ENCODE measurements at regions of chr11 and their contacts with region 1.

Region 1: GRCh38 chr11:125874556-125875124 is 12.8 kb upstream of the HYLS1 start:
- DNase-seq: peak; percentile 70
- ATAC-seq: peak; percentile 98
- H3K4me3 ChIP-seq: no peak overlapping the region
- H3K27ac ChIP-seq: no peak overlapping the region
- H3K4me1 ChIP-seq: no peaks in the 10 kb centered on the region
- H3K27me3 ChIP-seq: peaks cover 2% of the 10 kb centered on the region
- CTCF ChIP-seq: peak; percentile 82
- POLR2A ChIP-seq: no peak
- RAD21 ChIP-seq: peak; percentile 84

Region 2: GRCh38 chr11:124961972-124962609 is 912.5 kb before region 1 on chr11:
- CTCF ChIA-PET with region 1: no interaction called
- POLR2A ChIA-PET with region 1: no interaction called
- dilution Hi-C with region 1: no loop called
- in situ Hi-C with region 1: no loop called
- intact Hi-C with region 1: loop called (anchors 1 kb)
- DNase-seq: peak; percentile 85
- ATAC-seq: peak; percentile 100
- H3K4me3 ChIP-seq: no peak overlapping the region
- H3K27ac ChIP-seq: no peak overlapping the region
- H3K4me1 ChIP-seq: no peaks in the 10 kb centered on the region
- H3K27me3 ChIP-seq: no peaks in the 10 kb centered on the region
- CTCF ChIP-seq: peak; percentile 91
- POLR2A ChIP-seq: peak; percentile 43; the same call in 1 of the 2 replicates
- RAD21 ChIP-seq: peak; percentile 95

Region 3: GRCh38 chr11:125345421-125346178 is 529.0 kb before region 1 on chr11:
- CTCF ChIA-PET with region 1: no interaction called
- POLR2A ChIA-PET with region 1: no interaction called
- dilution Hi-C with region 1: no loop called
- in situ Hi-C with region 1: no loop called
- intact Hi-C with region 1: loop called (anchors 2 kb)
- DNase-seq: peak; percentile 67
- ATAC-seq: peak; percentile 82
- H3K4me3 ChIP-seq: no peak overlapping the region
- H3K27ac ChIP-seq: no peak overlapping the region
- H3K4me1 ChIP-seq: peaks cover 2% of the 10 kb centered on the region; the same call in 1 of the 2 replicates
- H3K27me3 ChIP-seq: no peaks in the 10 kb centered on the region
- CTCF ChIP-seq: peak; percentile 89
- POLR2A ChIP-seq: no peak
- RAD21 ChIP-seq: peak; percentile 78

Region 4: GRCh38 chr11:125494974-125495725 is 379.5 kb before region 1 on chr11:
- CTCF ChIA-PET with region 1: no interaction called
- POLR2A ChIA-PET with region 1: no interaction called
- dilution Hi-C with region 1: no loop called
- in situ Hi-C with region 1: no loop called
- intact Hi-C with region 1: loop called (anchors 10 kb)
- DNase-seq: peak; percentile 31
- ATAC-seq: peak; percentile 59
- H3K4me3 ChIP-seq: peak overlapping the region; percentile 94
- H3K27ac ChIP-seq: peak overlapping the region; percentile 83
- H3K4me1 ChIP-seq: peaks cover 5% of the 10 kb centered on the region; the same call in 1 of the 2 replicates
- H3K27me3 ChIP-seq: no peaks in the 10 kb centered on the region
- CTCF ChIP-seq: no peak
- POLR2A ChIP-seq: no peak
- RAD21 ChIP-seq: no peak

Region 5: GRCh38 chr11:125625630-125626287 is 248.9 kb before region 1 on chr11:
- CTCF ChIA-PET with region 1: interaction called, 4 read pairs
- POLR2A ChIA-PET with region 1: no interaction called
- dilution Hi-C with region 1: no loop called
- in situ Hi-C with region 1: loop called (anchors 10 kb)
- intact Hi-C with region 1: loop called (anchors 1 kb)
- DNase-seq: peak; percentile 85
- ATAC-seq: peak; percentile 73
- H3K4me3 ChIP-seq: peak overlapping the region; percentile 72
- H3K27ac ChIP-seq: peak overlapping the region; percentile 95
- H3K4me1 ChIP-seq: peaks cover 8% of the 10 kb centered on the region
- H3K27me3 ChIP-seq: no peaks in the 10 kb centered on the region
- CTCF ChIP-seq: no peak
- POLR2A ChIP-seq: peak; percentile 78
- RAD21 ChIP-seq: no peak

Region 6: GRCh38 chr11:125918140-125918840 is 43.6 kb after region 1 on chr11:
- CTCF ChIA-PET with region 1: no interaction called
- POLR2A ChIA-PET with region 1: no interaction called
- dilution Hi-C with region 1: no loop called
- in situ Hi-C with region 1: no loop called
- intact Hi-C with region 1: no loop called
- DNase-seq: no peak
- ATAC-seq: no peak
- H3K4me3 ChIP-seq: no peak overlapping the region
- H3K27ac ChIP-seq: no peak overlapping the region
- H3K4me1 ChIP-seq: no peaks in the 10 kb centered on the region
- H3K27me3 ChIP-seq: peaks cover 32% of the 10 kb centered on the region
- CTCF ChIP-seq: no peak
- POLR2A ChIP-seq: no peak
- RAD21 ChIP-seq: no peak

Region 7: DNA sequence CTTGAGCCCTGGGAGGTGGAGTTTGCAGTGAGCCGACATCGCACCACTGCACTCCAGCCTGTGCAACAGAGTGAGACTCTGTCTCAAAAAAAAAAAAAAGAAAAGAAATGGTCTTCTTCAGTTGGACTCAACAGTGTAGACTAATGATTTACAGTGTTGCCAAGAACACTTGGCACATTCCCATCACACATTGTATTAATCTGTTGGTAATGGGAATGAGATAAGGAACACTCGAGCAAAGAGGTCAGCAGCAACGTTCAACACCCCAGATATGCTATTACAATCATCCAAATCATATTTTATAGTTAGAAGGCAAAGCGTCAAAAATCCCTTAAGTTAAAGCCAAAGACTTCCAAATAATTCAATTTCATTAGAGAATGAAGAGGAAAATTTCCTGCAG is 173.6 kb after region 1 on chr11:
- CTCF ChIA-PET with region 1: no interaction called
- POLR2A ChIA-PET with region 1: no interaction called
- dilution Hi-C with region 1: no loop called
- in situ Hi-C with region 1: no loop called
- intact Hi-C with region 1: no loop called
- DNase-seq: no peak
- ATAC-seq: no peak
- H3K4me3 ChIP-seq: no peak overlapping the region
- H3K27ac ChIP-seq: no peak overlapping the region
- H3K4me1 ChIP-seq: no peaks in the 10 kb centered on the region
- H3K27me3 ChIP-seq: peaks cover 5% of the 10 kb centered on the region
- CTCF ChIP-seq: no peak
- POLR2A ChIP-seq: no peak
- RAD21 ChIP-seq: no peak

Region 8: DNA sequence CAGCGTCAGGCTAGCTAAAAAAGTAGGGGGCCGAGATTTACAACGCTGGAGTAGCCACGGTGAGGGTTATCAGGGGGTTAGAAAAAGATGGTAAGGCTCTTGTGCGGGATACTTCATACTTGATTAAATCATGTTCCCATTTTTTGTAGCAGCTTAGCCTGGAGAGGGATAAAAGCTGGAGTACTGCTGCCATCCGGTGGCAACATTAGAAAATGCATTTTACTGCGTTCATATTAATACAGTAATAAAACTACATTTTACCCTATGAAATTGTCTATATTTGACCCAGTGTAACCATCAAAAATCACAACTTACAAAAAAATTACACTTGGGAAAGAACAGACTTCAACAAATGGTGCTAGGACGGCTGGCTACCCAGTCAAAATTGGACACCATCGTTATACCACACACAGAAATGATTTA is 319.5 kb after region 1 on chr11:
- CTCF ChIA-PET with region 1: interaction called, 3 read pairs
- POLR2A ChIA-PET with region 1: no interaction called
- dilution Hi-C with region 1: no loop called
- in situ Hi-C with region 1: no loop called
- intact Hi-C with region 1: loop called (anchors 1 kb)
- DNase-seq: peak; percentile 59
- ATAC-seq: peak; percentile 96
- H3K4me3 ChIP-seq: no peak overlapping the region
- H3K27ac ChIP-seq: no peak overlapping the region
- H3K4me1 ChIP-seq: no peaks in the 10 kb centered on the region
- H3K27me3 ChIP-seq: no peaks in the 10 kb centered on the region
- CTCF ChIP-seq: peak; percentile 83
- POLR2A ChIP-seq: 0 out of 2 replicates have a peak, but pooled peaks have one; percentile 40
- RAD21 ChIP-seq: peak; percentile 96